ENCODE measurements at regions of chr3 and their contacts with region 1.

Region 1: GRCh38 chr3:16264708-16265454 is at the starts of genes DPH3 and OXNAD1:
- DNase-seq: peak; percentile 100
- H3K4me3 Mint-ChIP-seq: peak within 1 kb of the TSS; percentile 95
- H3K27ac Mint-ChIP-seq: peak within 1 kb of the TSS; percentile 96
- H3K4me1 Mint-ChIP-seq: peaks cover 19% of the 10 kb centered on the region
- H3K27me3 Mint-ChIP-seq: no peaks in the 10 kb centered on the region
- CTCF ChIP-seq: no peak
- total RNA-seq, gene DPH3: 30.5 and 39.8 TPM in 2 replicates
- total RNA-seq, gene OXNAD1: 19.0 and 27.6 TPM in 2 replicates

Region 2: GRCh38 chr3:15859507-15860013 is 405.3 kb before region 1 on chr3:
- CTCF ChIA-PET with region 1: no interaction called
- POLR2A ChIA-PET with region 1: interaction called, 12 read pairs
- intact Hi-C with region 1: no loop called
- DNase-seq: peak; percentile 92
- H3K4me3 Mint-ChIP-seq: peak overlapping the region; percentile 93
- H3K27ac Mint-ChIP-seq: peak overlapping the region; percentile 93
- H3K4me1 Mint-ChIP-seq: peaks cover 21% of the 10 kb centered on the region
- H3K27me3 Mint-ChIP-seq: no peaks in the 10 kb centered on the region
- CTCF ChIP-seq: no peak

Region 3: DNA sequence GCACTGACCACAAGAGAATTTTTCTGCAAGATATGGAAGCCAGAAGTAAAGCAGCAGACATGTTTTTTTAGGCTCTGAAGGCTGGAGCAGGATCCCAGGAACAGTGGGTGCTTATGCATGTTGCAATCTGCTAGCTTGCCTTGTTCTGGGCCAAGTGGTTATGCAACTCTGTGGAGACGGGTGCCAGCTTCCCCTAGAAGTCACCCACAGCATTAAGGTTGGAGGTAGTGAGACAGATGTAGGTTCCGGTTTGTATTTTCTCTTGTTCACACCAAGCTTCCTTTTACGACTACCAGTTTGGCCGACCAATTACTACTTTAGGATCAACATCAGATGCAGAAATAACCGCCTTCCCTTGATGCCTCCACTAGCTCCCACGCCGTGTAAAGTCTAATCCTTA is 11.3 kb before region 1 on chr3:
- CTCF ChIA-PET with region 1: interaction called, 7 read pairs
- POLR2A ChIA-PET with region 1: interaction called, 47 read pairs
- intact Hi-C with region 1: no loop called
- DNase-seq: peak; percentile 78
- H3K4me3 Mint-ChIP-seq: no peak overlapping the region
- H3K27ac Mint-ChIP-seq: no peak overlapping the region
- H3K4me1 Mint-ChIP-seq: peaks cover 22% of the 10 kb centered on the region
- H3K27me3 Mint-ChIP-seq: no peaks in the 10 kb centered on the region
- CTCF ChIP-seq: no peak

Region 4: GRCh38 chr3:16550676-16551341 is 285.9 kb after region 1 on chr3:
- CTCF ChIA-PET with region 1: interaction called, 19 read pairs
- POLR2A ChIA-PET with region 1: interaction called, 4 read pairs
- intact Hi-C with region 1: loop called (anchors 1 kb)
- DNase-seq: peak; percentile 90
- H3K4me3 Mint-ChIP-seq: no peak overlapping the region
- H3K27ac Mint-ChIP-seq: peak overlapping the region; percentile 54
- H3K4me1 Mint-ChIP-seq: peaks cover 22% of the 10 kb centered on the region
- H3K27me3 Mint-ChIP-seq: peaks cover 20% of the 10 kb centered on the region
- CTCF ChIP-seq: peak; percentile 82

Measured in MCF 10A (cell line).